ENCODE measurements at regions of chr3 and their contacts with region 1.

Region 1: DNA sequence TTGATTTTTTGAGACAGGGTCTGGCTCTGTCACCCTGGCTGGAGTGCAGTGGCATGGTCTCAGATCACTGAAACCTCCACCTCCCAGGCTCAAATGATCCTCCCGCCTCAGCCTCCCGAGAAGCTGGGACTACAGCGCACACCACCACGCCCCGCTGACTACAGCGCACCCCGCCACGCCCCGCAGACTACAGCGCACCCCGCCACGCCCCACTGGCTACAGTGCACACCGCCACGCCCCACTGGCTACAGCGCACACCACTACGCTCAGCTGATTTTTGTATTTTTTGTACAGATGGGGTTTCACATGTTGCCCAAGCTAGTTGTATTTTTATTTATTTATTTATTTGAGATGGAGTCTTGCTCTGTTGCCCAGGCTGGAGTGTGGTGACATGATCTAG is 35.6 kb downstream of the SLC51A start:
- DNase-seq: no peak
- H3K4me3 ChIP-seq: no peak overlapping the region
- H3K27ac ChIP-seq: no peak overlapping the region
- H3K4me1 ChIP-seq: peaks cover 0 to 10% (median 3%) of the 10 kb centered on the region in 4 donors
- H3K27me3 ChIP-seq: no peaks in the 10 kb centered on the region
- CTCF ChIP-seq: no peak
- EP300 ChIP-seq: no peak
- POLR2A ChIP-seq: no peak

Region 2: GRCh38 chr3:196186651-196187573 is 65.0 kb before region 1 on chr3:
- in situ Hi-C with region 1: no loop called
- intact Hi-C with region 1: no loop called
- DNase-seq: peak; percentile 43
- H3K4me3 ChIP-seq: peak overlapping the region in 1 of 4 donors; percentile 5
- H3K27ac ChIP-seq: peak overlapping the region in 3 of 4 donors; percentile 4 to 54 (median 24)
- H3K4me1 ChIP-seq: peaks cover 9 to 52% (median 17%) of the 10 kb centered on the region in 4 donors
- H3K27me3 ChIP-seq: no peaks in the 10 kb centered on the region
- CTCF ChIP-seq: no peak
- EP300 ChIP-seq: no peak
- POLR2A ChIP-seq: no peak

Region 3: DNA sequence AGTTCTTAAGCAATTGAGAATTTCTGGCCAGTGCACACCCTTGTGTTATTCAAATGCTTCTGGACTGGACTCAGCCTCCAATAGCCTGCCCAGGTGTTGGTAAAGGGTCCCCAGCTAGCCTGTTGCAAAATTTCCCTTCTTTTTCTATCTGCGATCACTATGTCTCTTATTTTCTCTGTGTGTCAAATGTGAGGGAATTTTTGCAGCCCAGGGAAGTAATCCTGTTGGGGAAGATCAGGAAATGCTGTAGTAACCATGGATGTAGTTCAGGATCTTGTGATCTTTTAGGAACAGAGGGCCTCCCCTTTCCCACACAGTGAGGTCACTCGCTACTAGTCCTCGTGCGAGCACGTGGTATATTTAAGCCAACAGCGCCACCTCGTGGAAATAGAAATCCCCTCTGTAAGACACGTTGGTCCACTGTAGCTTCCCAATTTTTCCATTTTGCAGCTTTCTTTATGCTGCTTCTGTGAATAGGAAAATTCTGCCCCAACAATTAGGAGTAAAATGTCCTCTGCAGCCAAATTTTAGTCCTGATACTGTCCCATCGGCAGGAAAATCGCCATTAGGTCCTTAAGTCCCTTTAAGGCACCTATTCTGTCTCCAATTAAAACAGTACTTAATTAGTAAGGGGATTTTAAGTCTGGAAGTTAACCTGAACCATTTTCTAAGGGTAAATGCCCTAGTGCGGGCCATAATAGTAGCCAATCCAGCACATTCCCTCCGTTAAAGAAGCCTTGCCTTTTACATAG is 267.2 kb after region 1 on chr3:
- in situ Hi-C with region 1: loop called (anchors 5 to 25 kb)
- intact Hi-C with region 1: loop called (anchors 5 kb)
- DNase-seq: peak; percentile 60
- H3K4me3 ChIP-seq: no peak overlapping the region
- H3K27ac ChIP-seq: no peak overlapping the region
- H3K4me1 ChIP-seq: no peaks in the 10 kb centered on the region
- H3K27me3 ChIP-seq: no peaks in the 10 kb centered on the region
- CTCF ChIP-seq: peak; percentile 45 to 59 (median 53)
- EP300 ChIP-seq: no peak
- POLR2A ChIP-seq: no peak

Region 4: DNA sequence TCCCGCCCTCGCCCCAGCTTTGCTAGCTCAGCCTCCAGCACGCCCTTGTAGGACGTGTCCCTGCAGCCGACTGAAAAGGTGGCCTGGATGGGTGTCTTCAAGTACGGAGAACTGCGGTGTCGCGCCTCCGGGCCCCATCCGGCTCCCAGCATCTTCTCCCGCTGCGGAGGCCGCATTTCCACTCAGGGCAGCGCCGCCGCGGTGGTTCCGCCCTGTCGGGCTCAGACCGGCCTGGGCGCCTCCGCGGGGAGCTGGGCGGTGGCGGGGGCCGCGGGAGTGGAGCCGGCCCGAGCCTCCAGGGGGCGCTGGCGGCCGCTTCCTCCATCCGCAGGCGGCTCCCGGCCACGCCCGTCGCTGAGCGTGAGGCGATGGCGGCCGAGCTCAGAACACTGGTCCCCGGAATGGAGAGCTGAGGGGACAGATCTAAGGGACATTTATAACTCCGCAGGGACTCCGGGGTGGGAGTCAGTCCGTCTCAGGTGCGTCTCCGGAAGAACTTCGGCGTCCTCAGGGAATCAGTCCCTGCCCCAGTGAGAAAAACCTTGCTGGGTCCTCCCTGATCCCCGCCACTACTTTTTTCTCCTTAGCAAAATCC is 276.8 kb after region 1 on chr3:
- in situ Hi-C with region 1: loop called in 3 of 4 experiments (anchors 10 to 25 kb)
- intact Hi-C with region 1: no loop called
- DNase-seq: peak; percentile 79
- H3K4me3 ChIP-seq: peak overlapping the region; percentile 10 to 46 (median 23)
- H3K27ac ChIP-seq: peak overlapping the region; percentile 13 to 68 (median 38)
- H3K4me1 ChIP-seq: peaks cover 0 to 4% (median 0%) of the 10 kb centered on the region in 4 donors
- H3K27me3 ChIP-seq: no peaks in the 10 kb centered on the region
- CTCF ChIP-seq: peak; percentile 31 to 77 (median 67)
- EP300 ChIP-seq: no peak
- POLR2A ChIP-seq: no peak

Region 5: DNA sequence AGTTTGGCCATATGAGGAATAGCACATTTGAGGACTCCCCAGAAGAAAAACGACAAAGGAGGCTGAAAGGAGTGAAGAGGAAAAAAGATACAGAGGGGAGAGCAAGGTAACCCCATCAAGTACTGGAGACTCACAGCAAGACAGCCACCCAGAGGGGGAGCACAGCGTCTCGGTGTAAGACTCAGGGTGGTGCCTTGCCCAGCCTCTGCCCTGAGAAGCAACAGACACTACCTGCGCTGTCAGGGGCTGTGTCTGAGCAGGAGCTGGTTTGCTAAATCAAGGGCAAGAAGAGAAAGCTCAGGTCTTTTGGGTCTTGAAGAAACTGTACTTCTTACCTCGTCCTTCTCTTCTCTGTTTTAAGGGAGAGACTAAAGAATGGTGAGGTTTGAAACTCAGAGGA is 344.4 kb after region 1 on chr3:
- in situ Hi-C with region 1: no loop called
- intact Hi-C with region 1: no loop called
- DNase-seq: no peak
- H3K4me3 ChIP-seq: no peak overlapping the region
- H3K27ac ChIP-seq: no peak overlapping the region
- H3K4me1 ChIP-seq: peaks cover 0 to 6% (median 0%) of the 10 kb centered on the region in 4 donors
- H3K27me3 ChIP-seq: peaks cover 10% of the 10 kb centered on the region
- CTCF ChIP-seq: no peak
- EP300 ChIP-seq: no peak
- POLR2A ChIP-seq: no peak

Measured in transverse colon (tissue), 4 donors.